H1 (cell line): ENCODE measurements at regions of chr1 and their contacts with region 1.

Region 1: GRCh38 chr1:100249537-100250257 is at the start of gene DBT:
- DNase-seq: peak; percentile 88 to 90
- H3K4me3 ChIP-seq: peak within 1 kb of the TSS; percentile 80 to 96 (median 90)
- H3K27ac ChIP-seq: peak within 1 kb of the TSS; percentile 96
- H3K4me1 ChIP-seq: peaks cover 0 to 5% (median 0%) of the 10 kb centered on the region in 4 experiments; a peak in 2 of 7 replicates
- H3K27me3 ChIP-seq: no peaks in the 10 kb centered on the region
- CTCF ChIP-seq: no peak
- EP300 ChIP-seq: peak in 1 of 2 experiments; percentile 61; a peak in 1 of 3 replicates
- POLR2A ChIP-seq: peak; percentile 97
- RAD21 ChIP-seq: 0 out of 4 replicates have a peak, but pooled peaks of 1 of the 2 experiments have one; percentile 7
- total RNA-seq, gene DBT: 24.6 and 25.4 TPM in 2 replicates

Region 2: GRCh38 chr1:100219883-100220282 is 29.8 kb before region 1 on chr1:
- CTCF ChIA-PET with region 1: no interaction called
- POLR2A ChIA-PET with region 1: interaction called, 11 read pairs
- DNase-seq: no peak
- H3K4me3 ChIP-seq: no peak overlapping the region
- H3K27ac ChIP-seq: no peak overlapping the region
- H3K4me1 ChIP-seq: no peaks in the 10 kb centered on the region
- H3K27me3 ChIP-seq: no peaks in the 10 kb centered on the region
- CTCF ChIP-seq: no peak
- EP300 ChIP-seq: no peak
- POLR2A ChIP-seq: no peak
- RAD21 ChIP-seq: no peak

Region 3: GRCh38 chr1:100265931-100266740 is 16.4 kb after region 1 on chr1 and contains the start of gene RTCA:
- CTCF ChIA-PET with region 1: no interaction called
- POLR2A ChIA-PET with region 1: interaction called, 30 read pairs
- DNase-seq: peak; percentile 87 to 95
- H3K4me3 ChIP-seq: peak within 1 kb of the TSS; percentile 83 to 93 (median 90)
- H3K27ac ChIP-seq: peak within 1 kb of the TSS; percentile 87
- H3K4me1 ChIP-seq: peaks cover 0 to 3% (median under 1%) of the 10 kb centered on the region in 4 experiments; a peak in 3 of 7 replicates
- H3K27me3 ChIP-seq: no peaks in the 10 kb centered on the region
- CTCF ChIP-seq: no peak
- EP300 ChIP-seq: no peak
- POLR2A ChIP-seq: peak; percentile 51 to 90
- RAD21 ChIP-seq: peak in 1 of 2 experiments; percentile 21; a peak in 2 of 4 replicates
- total RNA-seq, gene RTCA: 31.6 and 31.8 TPM in 2 replicates